CD14-positive monocyte (primary cell): ENCODE measurements at regions of chr9 and their contacts with region 1.

Region 1: DNA sequence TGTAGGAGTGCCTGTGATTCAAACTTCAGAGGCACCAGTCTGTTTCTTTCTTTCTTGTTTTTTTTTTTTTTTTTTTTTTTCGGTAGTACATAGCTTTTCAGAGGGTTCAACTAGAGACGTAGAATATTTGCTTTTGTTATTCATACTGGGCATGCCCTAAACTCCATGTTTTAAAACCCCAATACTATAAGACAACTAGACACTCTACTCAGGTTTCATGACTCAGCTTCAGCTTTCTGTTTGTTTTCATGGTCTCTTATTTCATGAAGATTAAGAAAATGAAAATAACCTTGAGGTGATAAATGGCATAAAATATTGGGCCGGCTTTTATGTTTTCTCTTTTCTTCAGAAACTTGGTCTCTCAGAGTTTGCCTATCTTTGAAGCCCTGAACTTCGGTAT is 2126.4 kb upstream of the ACO1 start:
- DNase-seq: no peak
- H3K4me3 ChIP-seq: no peak overlapping the region
- H3K4me3 Mint-ChIP-seq: no peak overlapping the region
- H3K27ac ChIP-seq: no peak overlapping the region
- H3K27ac Mint-ChIP-seq: no peak overlapping the region
- H3K4me1 ChIP-seq: no peaks in the 10 kb centered on the region
- H3K4me1 Mint-ChIP-seq: no peaks in the 10 kb centered on the region
- H3K27me3 ChIP-seq: no peaks in the 10 kb centered on the region
- H3K27me3 Mint-ChIP-seq: peaks cover 0 to 2% (median 0%) of the 10 kb centered on the region in 3 donors
- CTCF ChIP-seq: no peak

Region 2: DNA sequence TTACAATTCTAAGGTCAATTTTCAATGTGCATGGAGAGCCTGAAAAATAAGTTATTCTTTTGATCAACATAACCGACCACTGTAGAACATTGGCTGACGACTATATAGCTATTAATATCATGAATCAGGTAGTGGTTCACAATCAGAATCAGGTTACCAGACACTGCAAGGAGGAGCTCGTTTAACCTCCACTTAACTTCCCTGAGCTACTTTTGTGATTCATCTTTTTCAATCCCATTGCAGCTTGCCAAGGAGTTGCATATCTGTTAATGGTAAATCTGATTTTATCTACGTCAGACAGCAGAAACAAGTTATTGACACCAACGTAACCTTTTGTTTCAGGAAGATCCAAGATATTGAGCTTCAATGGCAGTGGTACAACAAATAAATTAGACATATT is 137.4 kb before region 1 on chr9:
- intact Hi-C with region 1: no loop called
- DNase-seq: no peak
- H3K4me3 ChIP-seq: no peak overlapping the region
- H3K4me3 Mint-ChIP-seq: no peak overlapping the region
- H3K27ac ChIP-seq: no peak overlapping the region
- H3K27ac Mint-ChIP-seq: no peak overlapping the region
- H3K4me1 ChIP-seq: no peaks in the 10 kb centered on the region
- H3K4me1 Mint-ChIP-seq: no peaks in the 10 kb centered on the region
- H3K27me3 ChIP-seq: no peaks in the 10 kb centered on the region
- H3K27me3 Mint-ChIP-seq: no peaks in the 10 kb centered on the region
- CTCF ChIP-seq: no peak

Region 3: DNA sequence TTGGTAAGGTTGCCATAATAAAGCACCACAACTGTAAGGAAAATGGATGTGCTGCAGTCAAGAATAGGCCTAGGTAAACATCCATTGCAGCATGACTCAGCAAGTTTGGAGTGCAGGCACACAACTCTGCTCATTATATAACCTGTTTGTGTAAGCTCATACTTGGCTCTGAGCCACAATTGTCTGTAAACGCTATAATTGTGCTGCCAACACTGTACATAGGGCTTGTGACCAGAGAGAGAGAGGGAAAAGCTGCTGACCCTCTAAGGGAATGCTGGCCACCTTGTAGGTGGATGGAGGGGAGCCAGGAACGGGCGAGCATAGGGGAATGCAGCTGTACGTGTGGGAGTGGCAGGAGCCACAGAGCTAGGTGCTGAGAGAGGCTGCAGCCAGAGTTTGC is 60.1 kb before region 1 on chr9:
- intact Hi-C with region 1: loop called in 1 of 2 experiments (anchors 10 kb)
- DNase-seq: no peak
- H3K4me3 ChIP-seq: no peak overlapping the region
- H3K4me3 Mint-ChIP-seq: no peak overlapping the region
- H3K27ac ChIP-seq: no peak overlapping the region
- H3K27ac Mint-ChIP-seq: no peak overlapping the region
- H3K4me1 ChIP-seq: no peaks in the 10 kb centered on the region
- H3K4me1 Mint-ChIP-seq: no peaks in the 10 kb centered on the region
- H3K27me3 ChIP-seq: no peaks in the 10 kb centered on the region
- H3K27me3 Mint-ChIP-seq: no peaks in the 10 kb centered on the region
- CTCF ChIP-seq: no peak

Region 4: GRCh38 chr9:30301271-30301963 is 43.3 kb after region 1 on chr9:
- intact Hi-C with region 1: no loop called
- DNase-seq: peak; percentile 78 to 83 (median 82)
- H3K4me3 ChIP-seq: peak overlapping the region in 2 of 3 experiments; percentile 13 to 61
- H3K4me3 Mint-ChIP-seq: peak overlapping the region; percentile 6 to 84
- H3K27ac ChIP-seq: peak overlapping the region; percentile 77 to 97
- H3K27ac Mint-ChIP-seq: peak overlapping the region; percentile 86 to 94 (median 87)
- H3K4me1 ChIP-seq: peaks cover 20 to 22% of the 10 kb centered on the region in 2 donors
- H3K4me1 Mint-ChIP-seq: peaks cover 21% of the 10 kb centered on the region
- H3K27me3 ChIP-seq: no peaks in the 10 kb centered on the region
- H3K27me3 Mint-ChIP-seq: no peaks in the 10 kb centered on the region
- CTCF ChIP-seq: no peak

Region 5: GRCh38 chr9:30329431-30329830 is 71.4 kb after region 1 on chr9:
- intact Hi-C with region 1: loop called in 1 of 2 experiments (anchors 10 kb)
- DNase-seq: no peak
- H3K4me3 ChIP-seq: no peak overlapping the region
- H3K4me3 Mint-ChIP-seq: no peak overlapping the region
- H3K27ac ChIP-seq: no peak overlapping the region
- H3K27ac Mint-ChIP-seq: no peak overlapping the region
- H3K4me1 ChIP-seq: no peaks in the 10 kb centered on the region
- H3K4me1 Mint-ChIP-seq: no peaks in the 10 kb centered on the region
- H3K27me3 ChIP-seq: no peaks in the 10 kb centered on the region
- H3K27me3 Mint-ChIP-seq: peaks cover 0 to 1% (median 0%) of the 10 kb centered on the region in 3 donors
- CTCF ChIP-seq: no peak

Region 6: GRCh38 chr9:30362373-30362772 is 104.3 kb after region 1 on chr9:
- intact Hi-C with region 1: no loop called
- DNase-seq: no peak
- H3K4me3 ChIP-seq: no peak overlapping the region
- H3K4me3 Mint-ChIP-seq: no peak overlapping the region
- H3K27ac ChIP-seq: no peak overlapping the region
- H3K27ac Mint-ChIP-seq: no peak overlapping the region
- H3K4me1 ChIP-seq: no peaks in the 10 kb centered on the region
- H3K4me1 Mint-ChIP-seq: no peaks in the 10 kb centered on the region
- H3K27me3 ChIP-seq: no peaks in the 10 kb centered on the region
- H3K27me3 Mint-ChIP-seq: no peaks in the 10 kb centered on the region
- CTCF ChIP-seq: no peak